Mammary epithelial cell (primary cell): ENCODE measurements at regions of chr17 and their contacts with region 1.

Region 1: GRCh38 chr17:33520426-33521330 is 227.6 kb upstream of the ASIC2 start:
- DNase-seq: no peak
- H3K4me3 ChIP-seq: no peak overlapping the region
- H3K27ac ChIP-seq: no peak overlapping the region
- H3K4me1 ChIP-seq: no peaks in the 10 kb centered on the region
- H3K27me3 ChIP-seq: no peaks in the 10 kb centered on the region
- CTCF ChIP-seq: peak; percentile 34 to 68

Region 2: DNA sequence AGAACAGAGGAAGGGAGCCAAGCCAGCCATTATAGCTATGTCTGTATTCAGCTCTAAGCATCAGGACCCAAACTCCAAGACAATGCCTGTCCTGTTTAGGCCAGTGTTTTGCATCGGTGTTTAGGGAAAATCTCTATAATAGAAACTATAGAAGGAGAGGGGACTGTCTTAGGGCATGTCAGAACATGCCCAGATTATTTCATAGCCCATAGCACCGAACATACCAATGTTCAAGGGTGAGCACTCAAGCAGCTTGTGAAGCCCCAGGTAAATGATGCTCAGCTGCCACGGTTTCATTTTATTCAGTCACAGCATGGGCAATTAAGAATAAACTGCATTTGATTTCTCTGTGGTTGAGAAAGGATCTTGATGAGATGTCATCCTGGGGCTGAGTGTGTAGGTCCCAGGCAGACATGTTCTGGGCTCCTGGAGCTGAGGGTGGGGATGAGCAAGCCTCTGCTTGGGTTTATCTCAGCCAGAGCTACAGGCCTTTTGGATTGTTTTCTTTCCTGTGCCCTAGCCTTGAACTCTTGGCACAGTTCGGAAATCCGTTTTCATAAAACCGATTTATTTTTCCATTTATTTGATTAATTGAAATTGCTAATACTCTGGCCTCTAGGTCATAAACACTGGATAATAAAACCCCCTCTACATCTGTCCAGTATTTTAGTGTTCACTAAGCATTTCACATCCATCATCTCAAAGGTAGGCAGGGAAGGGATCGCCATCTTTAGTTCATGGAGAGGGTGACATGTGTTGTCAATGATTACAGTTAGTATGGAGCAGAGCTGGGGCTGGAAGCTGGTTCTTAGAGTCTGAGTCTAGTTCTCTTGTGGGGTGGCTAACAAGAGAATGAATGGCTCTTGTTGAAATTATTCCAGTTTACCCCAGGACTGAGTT is 63.1 kb after region 1 on chr17:
- CTCF ChIA-PET with region 1: no interaction called
- dilution Hi-C with region 1: no loop called
- in situ Hi-C with region 1: loop called in 1 of 2 experiments (anchors 10 kb)
- intact Hi-C with region 1: no loop called
- DNase-seq: peak; percentile 22
- H3K4me3 ChIP-seq: no peak overlapping the region
- H3K27ac ChIP-seq: no peak overlapping the region
- H3K4me1 ChIP-seq: peaks cover 9% of the 10 kb centered on the region
- H3K27me3 ChIP-seq: no peaks in the 10 kb centered on the region
- CTCF ChIP-seq: no peak